ENCODE measurements at regions of chr12 and their contacts with region 1.

Region 1: DNA sequence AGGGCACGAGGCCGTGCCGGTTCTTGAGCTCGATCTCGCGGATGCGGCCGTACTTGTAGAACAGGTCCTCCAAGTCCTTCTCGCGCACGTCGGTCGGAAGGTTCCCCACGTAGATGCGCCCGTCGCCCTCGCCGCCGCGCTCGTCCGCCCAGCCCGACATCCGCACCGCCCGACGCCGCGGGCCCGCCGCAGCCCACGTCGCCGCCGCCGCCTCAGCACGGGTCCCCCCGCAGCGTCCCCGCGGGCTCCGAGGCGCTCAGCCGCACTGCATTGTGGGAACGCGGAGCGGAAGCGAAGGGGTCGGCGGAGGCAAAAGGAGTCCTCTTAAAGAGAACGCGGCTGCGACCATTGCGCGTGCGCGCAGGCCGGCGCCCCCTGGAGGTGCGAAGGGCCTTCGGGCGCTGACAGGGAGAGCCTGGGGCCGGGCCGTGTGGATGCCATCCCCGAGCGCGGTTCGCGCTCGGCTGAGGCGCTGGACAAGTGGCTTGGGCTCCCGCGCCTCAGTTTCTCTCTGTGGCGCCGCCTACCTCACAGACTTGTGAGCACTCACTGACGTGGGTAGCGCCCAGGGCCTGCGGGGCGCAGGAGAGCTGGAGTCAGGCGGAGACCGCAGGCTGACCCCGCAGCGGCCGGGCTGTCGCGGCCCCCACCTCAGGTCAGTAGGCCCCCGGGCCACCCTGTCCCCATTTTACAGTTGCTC is at the start of gene SRSF9:
- DNase-seq: peak; percentile 74
- H3K4me3 ChIP-seq: peak within 1 kb of the TSS; percentile 80
- H3K27me3 ChIP-seq: no peaks in the 10 kb centered on the region
- CTCF ChIP-seq: peak; percentile 92
- polyA plus RNA-seq, gene SRSF9: 88.0 and 108 TPM in 2 replicates

Region 2: DNA sequence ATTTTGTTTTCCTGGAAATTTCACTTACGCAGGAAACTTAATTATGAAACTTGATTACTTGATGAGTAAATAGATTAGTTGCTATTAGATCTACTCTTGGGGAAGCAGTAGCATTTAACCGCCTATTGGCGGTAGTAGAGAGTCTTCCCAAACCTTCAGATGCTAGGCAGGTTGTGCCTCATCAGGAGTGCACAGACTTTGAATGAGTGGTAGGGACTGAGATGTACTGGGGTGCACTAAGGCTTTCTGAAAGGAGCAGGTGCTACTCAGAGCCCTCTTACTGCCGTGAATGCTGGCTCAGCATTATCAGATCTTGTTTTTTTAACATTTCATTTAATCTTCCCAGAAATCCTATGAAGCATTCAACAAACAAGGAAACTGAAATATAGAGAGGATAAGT is 15.6 kb before region 1 on chr12:
- CTCF ChIA-PET with region 1: interaction called, 57 read pairs
- POLR2A ChIA-PET with region 1: no interaction called
- DNase-seq: no peak
- H3K4me3 ChIP-seq: no peak overlapping the region
- H3K27me3 ChIP-seq: no peaks in the 10 kb centered on the region
- CTCF ChIP-seq: peak; percentile 64

Region 3: DNA sequence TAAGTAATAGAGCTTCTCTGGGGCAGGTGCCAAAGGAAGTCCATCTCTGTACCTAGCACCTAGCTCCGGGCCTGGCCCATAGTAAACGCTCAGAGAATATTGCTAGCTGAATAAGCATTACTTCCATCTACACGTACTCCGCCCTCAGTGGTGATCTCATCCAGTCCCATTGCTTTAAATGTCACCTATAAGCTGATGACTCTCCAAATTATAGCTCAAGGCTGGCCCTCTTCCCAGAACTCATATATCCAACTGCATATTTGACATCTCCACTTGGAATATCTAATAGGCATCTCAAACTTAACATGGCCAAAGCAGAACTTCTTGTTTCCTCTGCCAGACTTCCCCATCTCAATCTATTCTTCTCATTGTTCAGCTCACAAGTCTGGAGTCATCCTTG is 19.4 kb after region 1 on chr12:
- CTCF ChIA-PET with region 1: interaction called, 13 read pairs
- POLR2A ChIA-PET with region 1: interaction called, 3 read pairs
- DNase-seq: no peak
- H3K4me3 ChIP-seq: no peak overlapping the region
- H3K27me3 ChIP-seq: no peaks in the 10 kb centered on the region
- CTCF ChIP-seq: no peak

Region 4: GRCh38 chr12:120495723-120496412 is 26.3 kb after region 1 on chr12 and contains the start of gene DYNLL1:
- CTCF ChIA-PET with region 1: interaction called, 13 read pairs
- POLR2A ChIA-PET with region 1: interaction called, 7 read pairs
- DNase-seq: peak; percentile 64
- H3K4me3 ChIP-seq: peak within 1 kb of the TSS; percentile 99
- H3K27me3 ChIP-seq: no peaks in the 10 kb centered on the region
- CTCF ChIP-seq: no peak
- polyA plus RNA-seq, gene DYNLL1: 358 and 610 TPM in 2 replicates

Measured in BJ (cell line).